ENCODE measurements at regions of chr17 and their contacts with region 1.

Region 1: DNA sequence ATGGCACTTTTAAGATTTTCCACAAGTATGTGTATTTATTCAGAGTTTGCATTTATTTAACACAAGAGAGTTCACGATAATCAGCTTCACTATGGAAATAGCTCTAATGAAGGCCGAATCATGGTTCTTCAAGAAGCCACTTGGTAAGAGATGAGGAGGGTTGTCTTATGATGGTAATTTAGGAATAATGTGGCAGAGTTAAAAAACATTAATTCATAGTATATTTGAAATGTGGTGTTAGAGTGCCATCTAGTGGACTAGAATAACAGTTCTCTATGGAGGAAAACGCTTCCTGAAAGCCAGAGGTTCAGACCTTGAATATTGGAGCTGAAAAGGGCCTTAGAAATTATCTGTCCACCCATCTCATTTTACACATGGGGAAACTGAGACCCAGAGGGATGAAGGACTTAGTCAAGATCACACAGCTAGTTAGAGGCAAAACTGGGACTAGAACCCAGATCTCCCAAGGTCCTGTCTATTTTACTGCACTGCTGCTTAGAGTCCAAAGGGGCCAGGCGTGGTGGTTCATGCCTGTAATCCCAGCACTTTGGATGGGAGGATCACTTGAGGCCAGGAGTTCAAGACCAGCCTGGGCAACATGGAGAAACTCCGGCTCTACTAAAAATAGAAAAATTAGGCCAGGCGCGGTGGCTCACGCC is 33.8 kb upstream of the KPNB1 start:
- DNase-seq: no peak
- H3K4me3 ChIP-seq: no peak overlapping the region
- CTCF ChIP-seq: peak; percentile 35

Region 2: GRCh38 chr17:47604598-47604927 is 11.3 kb before region 1 on chr17:
- CTCF ChIA-PET with region 1: interaction called, 60 read pairs
- POLR2A ChIA-PET with region 1: no interaction called
- DNase-seq: no peak
- H3K4me3 ChIP-seq: no peak overlapping the region
- CTCF ChIP-seq: no peak

Region 3: DNA sequence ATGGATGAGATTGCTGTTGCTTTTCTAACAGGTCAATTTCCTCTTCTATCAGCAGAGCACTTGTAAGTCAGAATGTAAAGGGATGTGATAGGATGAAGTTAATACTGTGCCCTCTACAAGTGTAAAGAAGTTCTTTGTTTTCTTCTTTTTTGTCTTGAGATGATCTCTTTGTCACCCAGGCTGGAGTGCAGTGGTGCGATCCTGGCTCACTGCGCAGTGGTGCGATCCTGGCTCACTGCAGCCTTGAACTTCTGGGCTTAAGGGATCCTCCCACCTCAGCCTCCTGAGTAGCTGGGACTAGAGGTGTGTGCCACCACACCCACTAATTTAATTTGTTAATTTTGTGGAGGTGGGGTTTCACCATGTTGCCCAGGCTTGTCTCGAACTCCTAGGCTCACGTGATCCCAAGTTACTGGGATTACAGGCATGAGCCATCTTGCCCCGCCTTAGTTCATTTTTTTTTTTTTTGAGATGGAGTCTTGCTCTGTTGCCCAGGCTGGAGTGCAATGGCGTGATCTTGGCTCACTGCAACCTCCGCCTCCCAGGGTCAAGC is 12.2 kb after region 1 on chr17:
- CTCF ChIA-PET with region 1: interaction called, 27 read pairs
- POLR2A ChIA-PET with region 1: no interaction called
- DNase-seq: no peak
- H3K4me3 ChIP-seq: no peak overlapping the region
- CTCF ChIP-seq: no peak